BJ (cell line): ENCODE measurements at regions of chr11 and their contacts with region 1.

Region 1: GRCh38 chr11:44025727-44026126 is 22.1 kb upstream of the ACCSL start:
- DNase-seq: no peak
- H3K4me3 ChIP-seq: no peak overlapping the region
- H3K27me3 ChIP-seq: peaks cover 5% of the 10 kb centered on the region; the same call in 1 of the 2 replicates
- CTCF ChIP-seq: no peak

Region 2: GRCh38 chr11:44036811-44037657 is 11.3 kb after region 1 on chr11:
- CTCF ChIA-PET with region 1: interaction called, 5 read pairs
- POLR2A ChIA-PET with region 1: interaction called, 11 read pairs
- DNase-seq: no peak
- H3K4me3 ChIP-seq: no peak overlapping the region
- H3K27me3 ChIP-seq: peaks cover 1% of the 10 kb centered on the region
- CTCF ChIP-seq: peak; percentile 89